ENCODE measurements at regions of chr4 and their contacts with region 1.

Region 1: GRCh38 chr4:8241895-8242696 is 27.5 kb upstream of the HTRA3 start:
- DNase-seq: peak; percentile 63
- H3K4me3 Mint-ChIP-seq: no peak overlapping the region
- H3K27ac Mint-ChIP-seq: no peak overlapping the region
- H3K4me1 Mint-ChIP-seq: no peaks in the 10 kb centered on the region
- H3K27me3 Mint-ChIP-seq: no peaks in the 10 kb centered on the region

Region 2: DNA sequence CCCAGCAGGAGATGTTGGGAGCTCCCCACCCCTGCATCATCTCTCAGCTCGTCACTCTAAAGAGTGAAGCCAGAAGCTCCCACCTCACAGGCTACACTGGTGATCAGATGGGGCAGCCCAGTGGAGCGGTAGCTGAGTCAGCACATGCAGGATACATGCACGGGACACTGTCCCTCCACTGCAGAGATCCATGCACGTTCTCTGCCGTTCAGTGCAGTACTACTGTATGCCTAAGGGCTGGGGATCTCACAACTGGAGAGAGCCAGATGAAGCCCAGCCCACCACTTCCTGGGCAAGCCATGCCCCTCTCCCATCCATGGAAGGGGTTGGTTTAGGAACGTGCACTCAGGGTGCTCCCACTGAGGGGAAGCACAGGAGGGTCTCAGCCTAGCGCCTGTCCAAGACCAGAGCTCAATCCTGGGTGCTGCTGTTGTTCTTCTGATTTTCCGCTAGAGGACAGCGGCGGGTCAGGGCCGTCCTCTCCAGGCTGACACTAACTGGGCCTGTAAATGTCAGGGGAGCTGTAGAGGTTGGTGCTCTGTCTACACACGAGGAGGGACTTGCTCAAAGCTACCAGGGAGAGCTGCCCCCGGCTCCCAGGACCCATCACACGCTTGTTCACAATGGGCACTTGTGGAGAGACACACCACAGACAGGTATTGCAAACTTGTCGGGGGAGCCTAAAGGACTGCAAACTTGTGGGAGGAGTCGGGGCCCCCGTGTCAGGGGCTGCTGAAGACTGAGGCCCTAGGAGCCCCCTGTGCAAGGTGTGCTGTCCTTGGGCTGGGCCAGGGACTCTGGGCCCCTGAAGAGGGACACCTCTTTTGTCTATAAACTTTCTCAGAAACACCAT is 65.3 kb before region 1 on chr4:
- intact Hi-C with region 1: loop called (anchors 1 kb)
- DNase-seq: peak; percentile 20
- H3K4me3 Mint-ChIP-seq: no peak overlapping the region
- H3K27ac Mint-ChIP-seq: no peak overlapping the region
- H3K4me1 Mint-ChIP-seq: no peaks in the 10 kb centered on the region
- H3K27me3 Mint-ChIP-seq: peaks cover 1% of the 10 kb centered on the region

Region 3: GRCh38 chr4:8260656-8261111 is 18.6 kb after region 1 on chr4:
- intact Hi-C with region 1: no loop called
- DNase-seq: no peak
- H3K4me3 Mint-ChIP-seq: no peak overlapping the region
- H3K27ac Mint-ChIP-seq: no peak overlapping the region
- H3K4me1 Mint-ChIP-seq: no peaks in the 10 kb centered on the region
- H3K27me3 Mint-ChIP-seq: peaks cover 1% of the 10 kb centered on the region

Region 4: DNA sequence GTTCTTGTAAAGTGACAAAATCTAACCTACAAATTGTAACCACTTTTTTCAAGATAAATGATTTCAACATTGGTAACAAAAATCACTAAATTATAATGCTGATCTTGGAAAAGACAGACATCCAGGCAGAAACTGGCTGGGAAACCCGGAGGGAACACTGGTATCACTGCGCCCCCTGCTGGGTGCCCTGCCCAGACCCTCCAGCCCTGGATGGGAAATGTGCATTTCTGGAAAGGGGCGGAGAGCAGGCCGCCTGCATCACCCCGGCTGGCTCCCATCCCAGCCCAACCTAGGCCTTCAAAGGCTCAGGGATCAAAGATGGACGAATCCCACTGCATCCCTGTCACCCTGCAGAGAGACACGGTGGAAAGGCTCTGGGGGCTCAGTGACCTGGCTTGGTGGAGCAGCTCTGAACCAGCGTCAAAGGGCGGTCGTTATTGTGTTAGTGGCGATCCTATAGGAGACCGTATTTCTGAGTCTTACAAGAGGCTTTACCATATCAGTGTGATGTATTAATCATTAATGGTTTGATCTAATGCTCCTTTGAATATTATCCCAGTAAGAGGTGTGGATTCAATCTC is 161.2 kb after region 1 on chr4:
- intact Hi-C with region 1: loop called (anchors 1 kb)
- DNase-seq: no peak
- H3K4me3 Mint-ChIP-seq: no peak overlapping the region
- H3K27ac Mint-ChIP-seq: no peak overlapping the region
- H3K4me1 Mint-ChIP-seq: no peaks in the 10 kb centered on the region
- H3K27me3 Mint-ChIP-seq: no peaks in the 10 kb centered on the region

Region 5: DNA sequence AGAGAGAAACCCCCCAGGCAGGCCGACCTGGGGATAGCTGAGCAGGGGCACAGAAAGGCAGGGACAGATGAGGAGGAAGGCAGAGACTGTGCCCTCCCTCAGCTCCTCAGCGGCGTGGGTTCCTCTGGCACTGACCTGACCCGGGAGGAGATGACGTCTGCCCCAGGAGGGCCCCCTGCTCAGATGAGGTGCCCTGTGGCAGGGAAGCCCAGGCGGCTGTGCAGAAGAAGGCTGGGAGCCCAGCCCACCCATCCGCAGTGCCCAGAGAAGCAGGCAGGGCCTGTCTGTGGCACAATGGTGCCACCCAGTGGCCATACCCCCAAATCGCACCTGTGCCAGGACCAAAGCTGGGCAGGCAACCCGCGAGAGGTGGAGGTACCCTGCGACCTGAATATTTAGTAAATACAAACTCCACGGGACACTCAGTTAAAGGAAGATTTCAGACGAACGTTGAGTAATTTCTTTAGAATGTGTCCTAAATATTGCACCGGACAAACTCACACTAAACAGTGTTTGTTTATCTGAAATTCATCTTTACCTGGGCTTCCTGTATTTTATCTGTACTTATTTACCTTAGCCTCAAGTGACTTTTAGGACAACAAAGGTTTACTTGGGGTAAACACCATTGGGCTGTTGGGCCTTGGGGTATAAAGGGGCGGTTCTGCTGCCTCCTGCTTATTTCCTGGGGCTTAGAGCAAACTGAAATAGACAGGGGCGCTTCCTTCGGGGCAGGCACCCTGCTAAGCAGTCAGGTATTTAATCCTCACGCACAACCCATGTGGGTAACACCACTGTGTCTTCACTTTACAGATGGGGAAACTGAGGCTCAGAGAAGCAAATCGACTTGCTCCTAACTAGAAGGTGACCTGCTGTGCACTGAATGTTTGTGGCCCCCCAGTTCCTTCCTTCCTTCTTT is 676.0 kb after region 1 on chr4:
- intact Hi-C with region 1: loop called (anchors 5 kb)
- DNase-seq: peak; percentile 48
- H3K4me3 Mint-ChIP-seq: no peak overlapping the region
- H3K27ac Mint-ChIP-seq: no peak overlapping the region
- H3K4me1 Mint-ChIP-seq: no peaks in the 10 kb centered on the region
- H3K27me3 Mint-ChIP-seq: no peaks in the 10 kb centered on the region

Measured in activated T-helper 1 cell treated with anti-CD3 and anti-CD28 coated beads, Interleukin-12 subunit alpha, Interleukin-12 subunit beta, Interleukin-2, Interleukin-4 antibody, amounts not matched to agents 30 ng/mL and 10 ng/mL and 1 ng/mL, durations not matched to agents 14 hours and 24 hours and 36 hours (primary cell).